Activated CD8-positive, alpha-beta T cell treated with anti-CD3 and anti-CD28 coated beads, Interleukin-2, amount 10 ng/mL, durations not matched to agents 7 days and 5 days (primary cell): ENCODE measurements at regions of chr2 and their contacts with region 1.

Region 1: DNA sequence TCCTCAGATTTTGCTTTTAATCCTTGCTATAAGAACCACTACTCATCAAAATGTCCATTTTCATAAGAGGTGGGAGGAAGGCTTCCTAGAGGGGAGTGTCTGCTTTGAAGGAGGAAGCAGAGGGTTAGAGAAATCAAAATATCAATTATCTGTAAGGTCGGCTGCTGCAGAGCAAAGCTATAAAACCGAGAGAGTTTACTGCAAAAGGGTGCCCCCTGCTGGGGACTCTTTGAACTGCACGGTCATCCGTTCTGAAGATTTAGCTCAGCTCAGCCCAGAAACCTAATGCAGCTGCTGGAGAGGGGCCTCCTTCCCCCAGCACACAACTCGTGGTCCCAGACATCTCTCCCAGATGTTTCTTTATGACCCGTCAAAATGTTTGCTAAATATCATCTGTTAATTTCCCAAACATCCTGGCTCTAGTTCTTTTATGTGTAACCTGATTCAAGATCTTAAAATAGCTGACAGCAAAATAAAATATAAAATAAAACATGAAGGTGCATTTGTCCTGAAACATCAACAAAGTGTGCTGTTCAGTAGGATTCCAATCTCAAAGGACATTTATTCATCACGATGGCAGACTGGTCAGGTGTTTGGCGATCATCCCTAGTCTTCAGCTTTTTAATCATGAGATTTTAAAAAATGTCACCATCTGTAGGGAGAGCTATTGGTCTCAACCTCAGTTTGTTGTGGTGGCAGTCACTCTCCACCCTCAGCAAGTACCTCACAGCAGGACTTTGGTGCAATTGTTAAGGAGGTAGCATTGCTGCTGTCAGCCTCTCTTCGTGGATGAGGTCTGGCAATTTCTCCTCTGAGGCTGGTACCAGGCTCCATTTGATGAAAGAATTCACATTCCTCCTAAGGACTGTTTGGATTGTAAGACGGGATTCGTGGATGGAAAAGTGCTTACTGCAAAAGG is 185.9 kb downstream of the MTX2 start:
- DNase-seq: peak; percentile 87
- ATAC-seq: peak; percentile 65
- H3K4me3 Mint-ChIP-seq: no peak overlapping the region
- H3K27ac Mint-ChIP-seq: no peak overlapping the region
- H3K4me1 Mint-ChIP-seq: no peaks in the 10 kb centered on the region
- H3K27me3 Mint-ChIP-seq: peaks cover 14% of the 10 kb centered on the region

Region 2: GRCh38 chr2:176140513-176141317 is 314.4 kb before region 1 on chr2:
- CTCF ChIA-PET with region 1: interaction called, 89 read pairs
- POLR2A ChIA-PET with region 1: no interaction called
- DNase-seq: peak; percentile 79
- ATAC-seq: peak; percentile 93
- H3K4me3 Mint-ChIP-seq: peak overlapping the region; percentile 6
- H3K27ac Mint-ChIP-seq: no peak overlapping the region
- H3K4me1 Mint-ChIP-seq: peaks cover 29% of the 10 kb centered on the region
- H3K27me3 Mint-ChIP-seq: peaks cover 69% of the 10 kb centered on the region

Region 3: DNA sequence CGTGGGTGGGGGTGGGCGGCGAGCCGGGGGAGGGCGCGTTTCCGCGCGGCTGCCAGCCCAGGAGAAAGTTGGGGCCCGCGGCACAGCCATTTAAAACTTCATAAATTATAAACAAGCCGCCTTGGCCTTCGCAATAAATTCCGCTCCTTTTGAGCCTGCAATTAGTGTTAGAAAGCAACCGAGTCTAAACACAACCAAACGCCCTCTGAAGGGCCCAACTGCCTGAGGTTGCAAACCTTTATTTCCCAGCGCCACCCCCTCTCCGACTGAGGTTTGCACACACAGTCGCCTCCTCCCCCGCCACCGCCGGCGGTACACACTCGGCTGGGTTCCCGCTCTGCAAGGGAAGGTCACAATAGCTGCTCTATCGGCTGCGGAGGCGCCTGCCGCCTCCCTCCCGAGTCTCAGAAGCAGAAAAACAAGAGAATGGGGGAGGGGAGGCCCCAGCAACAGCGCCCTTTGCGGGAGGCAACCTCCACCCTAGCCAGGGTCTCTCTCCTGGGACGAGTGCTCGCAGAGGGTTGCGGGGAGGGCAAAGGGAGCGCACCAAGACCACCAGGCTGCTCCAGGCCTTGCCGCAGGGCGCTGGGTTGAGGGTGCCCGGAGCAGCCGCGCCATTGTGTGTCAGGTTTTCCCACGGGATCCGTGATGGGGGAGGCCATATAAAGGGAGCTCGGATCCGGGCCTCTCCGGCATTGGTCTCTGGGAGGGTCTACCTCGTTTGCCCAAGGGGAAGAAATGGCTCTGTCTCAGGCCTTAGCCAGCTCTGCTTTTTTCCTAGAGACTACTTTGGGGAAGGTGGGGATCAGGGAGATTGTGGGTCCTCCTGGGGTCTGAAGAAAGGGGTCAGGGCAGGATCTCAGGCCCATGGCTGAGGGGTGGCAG is 280.1 kb before region 1 on chr2:
- CTCF ChIA-PET with region 1: interaction called, 10 read pairs
- POLR2A ChIA-PET with region 1: no interaction called
- DNase-seq: no peak
- ATAC-seq: no peak
- H3K4me3 Mint-ChIP-seq: no peak overlapping the region
- H3K27ac Mint-ChIP-seq: no peak overlapping the region
- H3K4me1 Mint-ChIP-seq: peaks cover 9% of the 10 kb centered on the region
- H3K27me3 Mint-ChIP-seq: peaks cover 84% of the 10 kb centered on the region

Region 4: DNA sequence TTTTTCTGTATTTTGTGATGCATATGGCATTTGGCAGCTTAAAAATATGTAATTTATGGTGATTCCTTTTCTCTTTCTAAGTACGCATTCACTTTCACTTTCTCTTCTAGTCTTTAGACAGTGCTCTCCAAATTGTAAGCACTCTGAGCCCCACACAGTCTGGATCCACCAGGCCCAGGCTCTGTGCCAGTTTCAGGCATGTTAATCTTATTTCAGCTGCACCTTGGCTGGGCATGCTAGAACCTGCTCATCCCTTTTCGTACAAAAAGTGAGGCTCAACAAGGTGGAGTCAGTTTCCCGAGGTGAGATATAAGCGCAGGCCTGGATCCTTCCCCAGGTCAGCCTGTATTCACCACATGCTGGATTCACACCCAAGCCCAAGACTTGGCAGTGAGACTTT is 18.0 kb after region 1 on chr2:
- CTCF ChIA-PET with region 1: interaction called, 18 read pairs
- POLR2A ChIA-PET with region 1: no interaction called
- DNase-seq: peak; percentile 44
- ATAC-seq: peak; percentile 93
- H3K4me3 Mint-ChIP-seq: peak overlapping the region; percentile 63
- H3K27ac Mint-ChIP-seq: peak overlapping the region; percentile 77
- H3K4me1 Mint-ChIP-seq: peaks cover 22% of the 10 kb centered on the region
- H3K27me3 Mint-ChIP-seq: peaks cover 5% of the 10 kb centered on the region

Region 5: DNA sequence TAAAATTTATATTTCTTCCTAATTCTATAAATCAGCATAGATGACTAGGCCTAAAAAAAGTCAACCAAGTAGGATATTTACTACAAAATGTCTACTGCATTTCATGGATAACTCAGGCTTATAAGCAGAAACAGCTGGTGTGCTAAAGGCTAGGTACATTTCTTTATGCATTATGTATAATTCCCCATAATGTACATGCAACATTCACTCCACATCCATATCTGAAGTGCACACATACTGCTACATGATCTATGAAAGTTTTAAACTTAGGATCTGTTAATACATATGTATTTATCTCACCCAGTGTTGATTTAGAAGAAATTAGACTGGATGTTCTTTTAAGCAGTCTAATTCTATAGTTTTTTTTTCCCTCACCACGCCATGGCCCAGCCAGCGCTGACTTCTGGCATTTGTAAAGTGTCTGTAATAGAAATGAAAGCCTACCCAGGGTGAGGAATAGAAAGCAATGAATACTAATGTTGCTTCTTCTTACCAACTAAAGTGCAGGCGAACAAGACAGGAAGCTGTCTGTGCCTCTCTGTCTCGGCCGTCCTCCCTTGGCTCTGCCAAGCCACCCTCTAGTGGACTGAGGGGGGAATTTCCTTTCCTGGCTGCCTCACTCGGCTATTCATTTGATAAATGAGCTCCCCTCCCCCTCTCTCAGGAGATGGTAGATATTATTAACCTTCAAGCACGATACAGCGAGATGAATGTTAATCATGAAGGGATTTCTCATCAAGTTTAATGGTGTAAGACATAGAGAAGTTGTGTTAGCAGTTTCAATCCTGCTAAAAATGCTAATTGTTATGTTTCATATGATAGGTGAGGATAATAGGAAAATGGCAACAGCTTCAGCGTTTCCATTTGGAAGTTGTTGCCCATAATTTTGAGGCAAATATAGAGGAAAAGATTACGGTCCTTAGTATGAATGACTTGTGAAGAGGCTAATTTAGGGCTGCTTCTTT is 198.6 kb after region 1 on chr2:
- CTCF ChIA-PET with region 1: interaction called, 13 read pairs
- POLR2A ChIA-PET with region 1: no interaction called
- DNase-seq: peak; percentile 59
- ATAC-seq: peak; percentile 64
- H3K4me3 Mint-ChIP-seq: no peak overlapping the region
- H3K27ac Mint-ChIP-seq: no peak overlapping the region
- H3K4me1 Mint-ChIP-seq: peaks cover 24% of the 10 kb centered on the region
- H3K27me3 Mint-ChIP-seq: peaks cover 39% of the 10 kb centered on the region